ENCODE measurements at regions of chr19 and their contacts with region 1.

Region 1: GRCh38 chr19:38718747-38719543 is 25.3 kb downstream of the CAPN12 start:
- DNase-seq: peak in 3 of 6 donors; percentile 58 to 83 (median 65)
- ATAC-seq: peak; percentile 27 to 59 (median 46)
- H3K4me3 ChIP-seq: no peak overlapping the region
- H3K27ac ChIP-seq: peak overlapping the region; percentile 35 to 70 (median 56)
- H3K4me1 ChIP-seq: peaks cover 11 to 14% (median 14%) of the 10 kb centered on the region in 3 donors
- H3K27me3 ChIP-seq: no peaks in the 10 kb centered on the region
- CTCF ChIP-seq: no peak

Region 2: DNA sequence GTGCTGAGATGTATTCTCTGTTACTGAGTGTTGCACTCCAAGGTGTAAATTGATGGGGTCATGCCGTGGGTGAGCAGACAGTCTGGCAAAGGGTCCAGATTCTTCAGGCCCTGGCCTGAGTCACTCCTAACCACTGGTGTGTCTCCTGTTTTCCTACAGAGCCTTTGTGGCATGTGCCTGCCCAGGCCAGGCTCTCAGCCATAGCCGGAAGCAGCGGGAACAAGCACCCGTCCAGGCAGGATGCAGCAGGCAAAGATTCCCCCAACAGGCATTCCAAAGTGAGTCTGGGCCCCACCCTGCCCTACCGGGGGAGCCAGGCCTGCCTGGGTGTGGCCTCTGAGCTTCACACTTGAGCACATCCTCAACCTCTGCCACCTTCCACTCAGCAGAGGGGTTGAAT is 556.9 kb before region 1 on chr19:
- intact Hi-C with region 1: no loop called
- DNase-seq: peak in 1 of 6 donors; percentile 13
- ATAC-seq: no peak
- H3K4me3 ChIP-seq: no peak overlapping the region
- H3K27ac ChIP-seq: no peak overlapping the region
- H3K4me1 ChIP-seq: no peaks in the 10 kb centered on the region
- H3K27me3 ChIP-seq: no peaks in the 10 kb centered on the region
- CTCF ChIP-seq: no peak

Region 3: GRCh38 chr19:38647368-38647965 is 71.5 kb before region 1 on chr19 and contains the start of gene ACTN4:
- intact Hi-C with region 1: no loop called
- DNase-seq: peak; percentile 97 to 100 (median 100)
- ATAC-seq: peak; percentile 84 to 92 (median 88)
- H3K4me3 ChIP-seq: peak within 1 kb of the TSS; percentile 72 to 85 (median 80)
- H3K27ac ChIP-seq: peak within 1 kb of the TSS; percentile 83 to 89 (median 88)
- H3K4me1 ChIP-seq: peaks cover 15 to 20% (median 20%) of the 10 kb centered on the region in 3 donors
- H3K27me3 ChIP-seq: no peaks in the 10 kb centered on the region
- CTCF ChIP-seq: no peak
- total RNA-seq, gene ACTN4: 137 to 284 (median 189) TPM

Region 4: GRCh38 chr19:38666663-38667511 is 52.1 kb before region 1 on chr19:
- intact Hi-C with region 1: loop called in 1 of 3 experiments (anchors 10 kb)
- DNase-seq: peak in 4 of 6 donors; percentile 74 to 90 (median 80)
- ATAC-seq: peak; percentile 75 to 81 (median 77)
- H3K4me3 ChIP-seq: no peak overlapping the region
- H3K27ac ChIP-seq: peak overlapping the region; percentile 68 to 93 (median 75)
- H3K4me1 ChIP-seq: peaks cover 78 to 100% (median 83%) of the 10 kb centered on the region in 3 donors
- H3K27me3 ChIP-seq: no peaks in the 10 kb centered on the region
- CTCF ChIP-seq: no peak

Region 5: DNA sequence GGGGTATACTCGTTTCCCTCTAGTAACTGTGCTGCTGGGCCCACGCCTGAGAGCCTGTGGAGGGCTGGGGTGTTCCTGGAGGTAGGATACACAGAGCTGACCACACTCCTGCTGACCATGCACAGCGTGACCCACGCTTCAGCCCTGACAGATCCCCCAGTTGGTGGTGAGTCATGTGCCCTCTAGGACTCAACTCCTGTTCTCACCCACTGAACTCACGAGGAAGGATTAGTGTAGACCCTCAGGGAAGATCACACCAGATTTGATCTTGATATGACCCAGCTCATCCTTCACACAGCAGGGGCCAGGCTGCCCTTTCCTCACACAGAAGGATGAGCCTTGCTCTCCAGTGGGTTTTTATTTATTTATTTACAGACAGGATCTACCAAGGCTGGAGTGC is 351.9 kb after region 1 on chr19:
- intact Hi-C with region 1: no loop called
- DNase-seq: no peak
- ATAC-seq: no peak
- H3K4me3 ChIP-seq: no peak overlapping the region
- H3K27ac ChIP-seq: no peak overlapping the region
- H3K4me1 ChIP-seq: no peaks in the 10 kb centered on the region
- H3K27me3 ChIP-seq: no peaks in the 10 kb centered on the region
- CTCF ChIP-seq: no peak